ENCODE measurements at regions of chr2 and their contacts with region 1.

Region 1: GRCh38 chr2:98157557-98157956 is 70.6 kb downstream of the VWA3B start:
- DNase-seq: peak in 1 of 2 experiments; percentile 46
- H3K4me3 ChIP-seq: no peak overlapping the region
- H3K4me3 Mint-ChIP-seq: no peak overlapping the region
- H3K27ac Mint-ChIP-seq: no peak overlapping the region
- H3K4me1 ChIP-seq: no peaks in the 10 kb centered on the region
- H3K4me1 Mint-ChIP-seq: no peaks in the 10 kb centered on the region
- H3K27me3 ChIP-seq: no peaks in the 10 kb centered on the region; the same call in 1 of the 2 replicates
- H3K27me3 Mint-ChIP-seq: no peaks in the 10 kb centered on the region
- CTCF ChIP-seq: peak; percentile 34 to 54

Region 2: DNA sequence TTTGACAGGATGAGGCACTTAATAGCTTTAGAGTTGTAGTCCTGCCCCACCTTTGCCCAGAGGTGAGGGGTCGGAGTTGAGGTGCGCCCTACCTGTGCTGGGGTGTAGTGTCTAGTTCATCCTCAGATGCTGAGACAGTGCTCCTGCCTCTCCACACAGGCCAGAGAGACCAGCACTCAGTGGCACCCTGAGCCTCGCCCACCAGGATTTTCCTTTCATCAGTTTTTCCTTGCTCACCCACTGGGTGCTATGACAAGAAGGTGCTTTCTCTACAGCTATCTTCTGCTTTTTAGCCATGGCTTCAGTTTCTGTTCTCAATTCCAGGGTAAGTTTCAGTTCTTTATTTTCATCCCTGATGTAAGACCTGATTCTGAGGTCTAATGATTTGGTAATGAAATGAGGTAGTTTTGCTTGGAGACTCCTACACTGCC is 145.0 kb before region 1 on chr2:
- CTCF ChIA-PET with region 1: no interaction called
- POLR2A ChIA-PET with region 1: no interaction called
- intact Hi-C with region 1: loop called (anchors 10 kb)
- DNase-seq: no peak
- H3K4me3 ChIP-seq: no peak overlapping the region
- H3K4me3 Mint-ChIP-seq: no peak overlapping the region
- H3K27ac Mint-ChIP-seq: no peak overlapping the region
- H3K4me1 ChIP-seq: no peaks in the 10 kb centered on the region
- H3K4me1 Mint-ChIP-seq: no peaks in the 10 kb centered on the region
- H3K27me3 ChIP-seq: no peaks in the 10 kb centered on the region
- H3K27me3 Mint-ChIP-seq: no peaks in the 10 kb centered on the region
- CTCF ChIP-seq: no peak

Region 3: DNA sequence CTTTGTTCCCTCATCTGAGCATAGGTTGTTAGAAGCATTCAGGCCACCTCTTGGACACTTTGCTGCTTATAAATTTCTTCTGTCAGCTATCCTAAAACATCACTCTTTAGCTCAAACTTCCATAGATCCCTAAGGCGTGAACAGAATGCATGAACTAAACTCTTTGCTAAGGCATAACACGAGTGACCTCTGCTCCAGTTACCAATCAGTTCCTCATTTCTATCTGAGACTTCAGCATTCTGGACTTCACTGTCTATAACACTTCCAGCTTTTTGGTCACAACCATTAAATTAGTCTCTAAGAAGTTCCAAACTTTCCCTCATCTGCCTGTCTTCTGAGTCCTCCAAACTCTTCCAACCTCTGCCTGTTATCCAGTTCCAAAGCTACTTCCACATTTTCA is 78.9 kb before region 1 on chr2:
- CTCF ChIA-PET with region 1: no interaction called
- POLR2A ChIA-PET with region 1: no interaction called
- intact Hi-C with region 1: no loop called
- DNase-seq: no peak
- H3K4me3 ChIP-seq: no peak overlapping the region
- H3K4me3 Mint-ChIP-seq: no peak overlapping the region
- H3K27ac Mint-ChIP-seq: no peak overlapping the region
- H3K4me1 ChIP-seq: no peaks in the 10 kb centered on the region
- H3K4me1 Mint-ChIP-seq: no peaks in the 10 kb centered on the region
- H3K27me3 ChIP-seq: no peaks in the 10 kb centered on the region
- H3K27me3 Mint-ChIP-seq: no peaks in the 10 kb centered on the region
- CTCF ChIP-seq: no peak

Region 4: DNA sequence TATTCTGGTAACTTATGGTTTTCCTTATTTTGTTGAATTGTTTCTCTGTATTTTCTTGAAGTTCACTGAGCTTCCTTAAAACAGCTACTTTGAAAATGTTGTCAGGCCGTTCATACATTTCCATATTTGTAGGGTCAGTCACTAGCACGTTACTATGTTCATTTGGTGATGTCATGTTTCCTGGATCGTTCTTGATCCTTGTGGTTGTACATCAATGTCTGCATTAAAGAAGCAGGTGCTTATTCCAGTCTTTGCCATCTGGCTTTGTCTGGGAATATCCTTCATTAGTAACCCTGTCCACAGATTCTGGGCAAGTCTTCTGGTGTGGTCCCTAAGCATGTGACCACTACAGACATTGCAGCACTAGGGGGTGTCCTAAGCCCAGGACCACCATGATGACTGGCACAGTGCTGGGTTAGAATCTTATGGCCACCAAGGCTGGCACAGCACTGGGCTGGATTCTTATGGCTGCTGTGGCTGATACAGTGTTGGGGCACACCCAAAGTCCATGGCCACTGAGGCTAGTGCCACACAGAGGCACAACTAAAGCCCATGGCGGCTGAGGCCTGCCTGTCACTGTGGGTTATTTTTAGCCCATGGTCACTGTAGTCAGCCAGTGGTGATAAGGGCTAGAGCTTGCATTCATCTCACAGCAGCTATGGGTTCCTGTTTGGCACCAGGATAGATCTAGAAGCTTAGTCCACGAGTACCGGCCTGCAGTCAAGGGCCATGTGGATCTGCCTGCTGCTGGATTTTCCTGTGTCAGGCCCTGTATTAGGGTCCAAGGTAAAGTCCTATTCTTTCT is 57.4 kb before region 1 on chr2:
- CTCF ChIA-PET with region 1: no interaction called
- POLR2A ChIA-PET with region 1: no interaction called
- intact Hi-C with region 1: no loop called
- DNase-seq: no peak
- H3K4me3 ChIP-seq: no peak overlapping the region
- H3K4me3 Mint-ChIP-seq: no peak overlapping the region
- H3K27ac Mint-ChIP-seq: no peak overlapping the region
- H3K4me1 ChIP-seq: no peaks in the 10 kb centered on the region
- H3K4me1 Mint-ChIP-seq: no peaks in the 10 kb centered on the region
- H3K27me3 ChIP-seq: no peaks in the 10 kb centered on the region
- H3K27me3 Mint-ChIP-seq: no peaks in the 10 kb centered on the region
- CTCF ChIP-seq: no peak

Region 5: DNA sequence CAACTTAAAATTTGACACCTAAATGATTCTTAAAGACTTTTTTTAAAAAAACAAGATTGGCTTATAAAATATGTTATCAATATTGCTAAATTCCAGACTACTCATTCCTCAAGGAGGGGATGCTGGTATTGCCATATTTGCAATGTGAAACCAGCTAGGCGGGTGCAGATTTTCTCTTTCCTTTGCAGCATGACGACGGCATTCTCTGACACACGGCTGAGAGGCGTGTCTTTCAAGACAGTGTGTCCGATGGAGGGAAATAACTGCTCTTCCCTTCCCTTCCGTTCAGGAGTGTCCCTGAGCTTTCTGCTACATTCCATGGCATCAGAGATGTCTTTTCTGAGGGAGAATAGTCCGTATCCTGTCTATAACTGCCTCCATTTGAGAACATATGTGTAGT is 150.5 kb after region 1 on chr2:
- CTCF ChIA-PET with region 1: no interaction called
- POLR2A ChIA-PET with region 1: no interaction called
- intact Hi-C with region 1: no loop called
- DNase-seq: no peak
- H3K4me3 ChIP-seq: no peak overlapping the region
- H3K4me3 Mint-ChIP-seq: no peak overlapping the region
- H3K27ac Mint-ChIP-seq: no peak overlapping the region
- H3K4me1 ChIP-seq: no peaks in the 10 kb centered on the region
- H3K4me1 Mint-ChIP-seq: no peaks in the 10 kb centered on the region
- H3K27me3 ChIP-seq: no peaks in the 10 kb centered on the region
- H3K27me3 Mint-ChIP-seq: peaks cover 10% of the 10 kb centered on the region
- CTCF ChIP-seq: no peak

Region 6: DNA sequence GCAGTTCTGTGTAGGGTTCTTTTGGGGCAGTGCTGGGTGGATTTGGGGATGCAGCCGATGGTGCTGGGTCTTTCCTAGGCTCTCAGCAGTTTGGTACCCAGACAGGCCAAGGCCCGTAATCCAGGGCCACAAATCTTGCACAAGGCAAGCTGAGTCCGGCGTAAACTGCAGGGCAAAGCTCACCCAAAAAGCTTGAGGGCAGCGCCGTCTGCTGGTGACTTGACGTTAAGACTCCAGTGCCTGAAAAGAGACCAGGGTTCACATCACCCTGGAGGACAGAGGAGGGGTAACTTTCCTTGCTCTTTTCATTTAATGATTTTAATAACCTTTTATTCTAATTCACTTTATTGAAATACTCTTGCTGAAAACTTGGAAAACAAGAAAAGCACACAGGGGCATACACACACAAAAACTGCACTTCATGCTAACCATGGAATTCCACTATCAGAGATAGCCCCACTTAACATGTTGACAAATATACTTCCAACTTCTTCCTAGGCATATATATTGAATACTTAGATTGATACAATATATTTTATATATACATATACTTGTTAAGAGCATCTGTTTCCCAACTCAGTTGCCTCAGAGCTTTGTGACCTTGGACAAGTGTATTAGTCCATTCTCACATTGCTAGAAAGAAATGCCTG is 227.6 kb after region 1 on chr2:
- CTCF ChIA-PET with region 1: no interaction called
- POLR2A ChIA-PET with region 1: no interaction called
- intact Hi-C with region 1: loop called (anchors 2 kb)
- DNase-seq: peak; percentile 71 to 84
- H3K4me3 ChIP-seq: no peak overlapping the region
- H3K4me3 Mint-ChIP-seq: no peak overlapping the region
- H3K27ac Mint-ChIP-seq: no peak overlapping the region
- H3K4me1 ChIP-seq: no peaks in the 10 kb centered on the region
- H3K4me1 Mint-ChIP-seq: no peaks in the 10 kb centered on the region
- H3K27me3 ChIP-seq: no peaks in the 10 kb centered on the region; the same call in 1 of the 2 replicates
- H3K27me3 Mint-ChIP-seq: peaks cover 5% of the 10 kb centered on the region
- CTCF ChIP-seq: peak; percentile 93 to 97